ENCODE measurements at regions of chr6 and their contacts with region 1.

Region 1: GRCh38 chr6:99559057-99559456 is 9.4 kb downstream of the CCNC start:
- DNase-seq: no peak
- ATAC-seq: no peak
- H3K4me3 ChIP-seq: no peak overlapping the region
- H3K4me3 Mint-ChIP-seq: no peak overlapping the region
- H3K27ac ChIP-seq: no peak overlapping the region
- H3K27ac Mint-ChIP-seq: no peak overlapping the region
- H3K4me1 ChIP-seq: no peaks in the 10 kb centered on the region
- H3K4me1 Mint-ChIP-seq: peaks cover 0 to 14% (median 13%) of the 10 kb centered on the region in 7 donors
- H3K27me3 ChIP-seq: no peaks in the 10 kb centered on the region
- H3K27me3 Mint-ChIP-seq: no peaks in the 10 kb centered on the region

Region 2: DNA sequence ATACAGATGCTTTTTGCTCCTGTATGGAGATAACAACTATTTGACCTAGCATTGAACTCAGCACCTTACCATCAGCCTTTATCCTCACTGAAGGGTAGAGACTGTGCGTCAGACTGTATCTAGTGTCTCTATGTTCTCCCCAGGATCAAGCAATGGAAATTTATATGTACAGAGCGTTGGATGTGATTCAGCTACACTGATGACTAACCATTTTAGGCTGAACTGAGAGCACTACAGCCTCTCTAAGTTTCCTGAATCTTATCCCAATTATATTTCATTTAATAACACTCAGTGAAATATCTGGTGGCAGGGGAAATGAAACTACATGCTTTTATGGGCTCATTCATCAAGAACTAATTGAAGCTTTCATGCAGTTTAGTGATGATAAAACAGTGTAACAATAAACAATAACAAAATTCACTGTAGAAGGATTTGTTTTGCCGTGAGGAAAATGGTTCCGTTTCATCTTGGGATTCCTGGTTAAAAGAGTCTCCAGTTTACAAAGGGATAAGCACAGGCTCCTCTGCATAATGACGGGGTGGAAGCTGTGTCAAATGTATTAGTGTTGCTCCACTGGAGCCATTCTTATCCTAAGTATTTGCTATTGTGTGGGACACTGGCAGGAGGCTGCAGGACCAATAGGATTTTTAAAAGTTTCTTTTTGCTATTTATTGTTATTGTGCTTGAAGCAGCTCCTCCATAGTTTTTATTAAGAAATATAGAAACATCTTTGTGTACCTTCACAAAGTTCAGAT is 1708.4 kb before region 1 on chr6:
- CTCF ChIA-PET with region 1: no interaction called
- POLR2A ChIA-PET with region 1: no interaction called
- intact Hi-C with region 1: no loop called
- DNase-seq: no peak
- ATAC-seq: no peak
- H3K4me3 ChIP-seq: no peak overlapping the region
- H3K4me3 Mint-ChIP-seq: no peak overlapping the region
- H3K27ac ChIP-seq: no peak overlapping the region
- H3K27ac Mint-ChIP-seq: no peak overlapping the region
- H3K4me1 ChIP-seq: no peaks in the 10 kb centered on the region
- H3K4me1 Mint-ChIP-seq: no peaks in the 10 kb centered on the region
- H3K27me3 ChIP-seq: no peaks in the 10 kb centered on the region
- H3K27me3 Mint-ChIP-seq: no peaks in the 10 kb centered on the region

Region 3: DNA sequence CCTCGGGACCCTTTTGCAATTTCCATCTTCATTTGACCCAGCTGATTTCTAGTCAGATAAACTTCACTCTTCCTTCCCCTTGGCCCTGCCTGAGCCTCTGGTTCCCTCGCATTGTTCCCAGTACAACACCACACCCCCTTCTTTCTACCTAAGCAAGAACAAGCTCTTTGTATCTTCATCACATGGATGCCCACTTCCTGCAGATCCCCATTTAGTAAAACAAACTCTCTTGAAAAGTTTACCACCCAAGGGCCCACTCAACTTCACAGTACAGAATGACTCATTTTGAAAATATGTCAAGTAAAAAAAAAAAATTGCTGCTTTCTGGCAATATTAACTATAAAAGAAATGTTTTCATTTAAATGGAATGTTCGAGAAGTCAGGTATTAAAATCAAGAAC is 214.8 kb before region 1 on chr6:
- CTCF ChIA-PET with region 1: no interaction called
- POLR2A ChIA-PET with region 1: no interaction called
- intact Hi-C with region 1: no loop called
- DNase-seq: no peak
- ATAC-seq: no peak
- H3K4me3 ChIP-seq: no peak overlapping the region
- H3K4me3 Mint-ChIP-seq: no peak overlapping the region
- H3K27ac ChIP-seq: no peak overlapping the region
- H3K27ac Mint-ChIP-seq: no peak overlapping the region
- H3K4me1 ChIP-seq: no peaks in the 10 kb centered on the region
- H3K4me1 Mint-ChIP-seq: peaks cover 0 to 3% (median 0%) of the 10 kb centered on the region in 7 donors
- H3K27me3 ChIP-seq: peaks cover 0 to 8% of the 10 kb centered on the region in 2 donors
- H3K27me3 Mint-ChIP-seq: peaks cover 46 to 72% (median 54%) of the 10 kb centered on the region in 5 donors

Region 4: DNA sequence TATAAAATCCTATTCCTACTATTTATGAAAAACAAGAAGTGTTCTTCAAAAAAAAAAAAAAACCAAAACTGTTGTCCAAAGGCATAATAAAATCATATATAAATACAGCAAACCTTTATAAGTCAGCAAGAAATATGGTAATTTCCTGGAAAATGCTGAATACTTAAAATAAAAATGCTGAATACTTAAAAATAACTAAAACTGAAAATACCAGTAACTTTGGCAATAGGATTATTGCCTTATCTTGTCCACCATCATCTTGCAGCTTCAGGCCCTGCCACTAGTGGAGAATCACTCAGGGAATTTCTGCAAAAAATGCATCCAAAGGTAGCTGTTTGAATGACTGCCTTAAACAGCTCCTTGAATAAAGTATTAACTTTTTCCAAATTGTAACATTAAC is 15.1 kb before region 1 on chr6:
- CTCF ChIA-PET with region 1: no interaction called
- POLR2A ChIA-PET with region 1: interaction called, 3 read pairs
- intact Hi-C with region 1: loop called in 1 of 2 experiments (anchors 2 kb)
- DNase-seq: no peak
- ATAC-seq: no peak
- H3K4me3 ChIP-seq: no peak overlapping the region
- H3K4me3 Mint-ChIP-seq: no peak overlapping the region
- H3K27ac ChIP-seq: no peak overlapping the region
- H3K27ac Mint-ChIP-seq: no peak overlapping the region
- H3K4me1 ChIP-seq: no peaks in the 10 kb centered on the region
- H3K4me1 Mint-ChIP-seq: peaks cover 0 to 16% (median 0%) of the 10 kb centered on the region in 7 donors
- H3K27me3 ChIP-seq: no peaks in the 10 kb centered on the region
- H3K27me3 Mint-ChIP-seq: no peaks in the 10 kb centered on the region

Region 5: DNA sequence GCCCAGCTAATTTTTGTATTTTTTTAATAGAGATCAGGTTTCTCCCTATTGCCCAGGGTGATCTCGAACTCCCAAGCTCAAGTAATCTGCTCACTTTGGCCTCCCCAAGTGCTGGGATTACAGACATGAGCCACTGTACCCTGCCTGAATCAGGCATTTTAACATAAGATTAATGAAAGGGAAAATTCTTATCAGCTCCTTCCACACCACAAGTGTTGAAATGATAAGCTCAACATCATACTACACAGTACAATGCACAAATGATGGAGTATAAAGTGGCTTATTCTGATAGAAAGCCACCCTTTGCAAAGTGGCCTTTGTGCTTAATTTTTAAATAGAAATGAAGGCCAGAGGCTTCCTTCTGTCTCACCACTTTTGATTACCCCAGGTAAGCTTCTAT is 506.3 kb after region 1 on chr6:
- CTCF ChIA-PET with region 1: no interaction called
- POLR2A ChIA-PET with region 1: no interaction called
- intact Hi-C with region 1: no loop called
- DNase-seq: no peak
- ATAC-seq: no peak
- H3K4me3 ChIP-seq: no peak overlapping the region
- H3K4me3 Mint-ChIP-seq: no peak overlapping the region
- H3K27ac ChIP-seq: no peak overlapping the region
- H3K27ac Mint-ChIP-seq: no peak overlapping the region
- H3K4me1 ChIP-seq: no peaks in the 10 kb centered on the region
- H3K4me1 Mint-ChIP-seq: no peaks in the 10 kb centered on the region
- H3K27me3 ChIP-seq: no peaks in the 10 kb centered on the region
- H3K27me3 Mint-ChIP-seq: peaks cover 0 to 4% (median 3%) of the 10 kb centered on the region in 5 donors